ENCODE measurements at regions of chrX and their contacts with region 1.

Region 1: GRCh38 chrX:54639346-54640102 is 109.5 kb downstream of the GNL3L start:
- DNase-seq: peak; percentile 74 to 92 (median 89)
- H3K4me3 ChIP-seq: peak overlapping the region; percentile 21 to 72 (median 54)
- H3K27ac ChIP-seq: peak overlapping the region; percentile 58 to 97 (median 88)
- H3K27me3 ChIP-seq: peaks cover 0 to 36% (median 0%) of the 10 kb centered on the region in 45 donors
- CTCF ChIP-seq: peak in 55 of 56 donors; percentile 38 to 78 (median 64)

Region 2: GRCh38 chrX:54529552-54530357 is 109.8 kb before region 1 on chrX and contains the start of gene GNL3L:
- intact Hi-C with region 1: loop called in 1 of 2 experiments (anchors 10 kb)
- DNase-seq: peak; percentile 66 to 89 (median 82)
- H3K4me3 ChIP-seq: peak within 1 kb of the TSS; percentile 46 to 86 (median 69)
- H3K27ac ChIP-seq: peak within 1 kb of the TSS; percentile 52 to 96 (median 91)
- H3K27me3 ChIP-seq: peaks cover 0 to 26% (median under 1%) of the 10 kb centered on the region in 45 donors
- CTCF ChIP-seq: peak in 5 of 56 donors; percentile 7 to 17 (median 11)
- total RNA-seq, gene GNL3L: 18.8 to 35.6 (median 27.4) TPM

Region 3: GRCh38 chrX:54808605-54809483 is 169.3 kb after region 1 on chrX:
- intact Hi-C with region 1: loop called (anchors 1 to 2 kb)
- DNase-seq: peak; percentile 78 to 89 (median 86)
- H3K4me3 ChIP-seq: peak overlapping the region; percentile 31 to 86 (median 69)
- H3K27ac ChIP-seq: peak overlapping the region; percentile 32 to 97 (median 91)
- H3K27me3 ChIP-seq: peaks cover 0 to 67% (median 6%) of the 10 kb centered on the region in 45 donors
- CTCF ChIP-seq: no peak

Measured in dorsolateral prefrontal cortex (tissue), 120 donors.